Activated CD4-positive, alpha-beta T cell treated with anti-CD3 and anti-CD28 coated beads for 36 hours (primary cell): ENCODE measurements at regions of chrX and their contacts with region 1.

Region 1: DNA sequence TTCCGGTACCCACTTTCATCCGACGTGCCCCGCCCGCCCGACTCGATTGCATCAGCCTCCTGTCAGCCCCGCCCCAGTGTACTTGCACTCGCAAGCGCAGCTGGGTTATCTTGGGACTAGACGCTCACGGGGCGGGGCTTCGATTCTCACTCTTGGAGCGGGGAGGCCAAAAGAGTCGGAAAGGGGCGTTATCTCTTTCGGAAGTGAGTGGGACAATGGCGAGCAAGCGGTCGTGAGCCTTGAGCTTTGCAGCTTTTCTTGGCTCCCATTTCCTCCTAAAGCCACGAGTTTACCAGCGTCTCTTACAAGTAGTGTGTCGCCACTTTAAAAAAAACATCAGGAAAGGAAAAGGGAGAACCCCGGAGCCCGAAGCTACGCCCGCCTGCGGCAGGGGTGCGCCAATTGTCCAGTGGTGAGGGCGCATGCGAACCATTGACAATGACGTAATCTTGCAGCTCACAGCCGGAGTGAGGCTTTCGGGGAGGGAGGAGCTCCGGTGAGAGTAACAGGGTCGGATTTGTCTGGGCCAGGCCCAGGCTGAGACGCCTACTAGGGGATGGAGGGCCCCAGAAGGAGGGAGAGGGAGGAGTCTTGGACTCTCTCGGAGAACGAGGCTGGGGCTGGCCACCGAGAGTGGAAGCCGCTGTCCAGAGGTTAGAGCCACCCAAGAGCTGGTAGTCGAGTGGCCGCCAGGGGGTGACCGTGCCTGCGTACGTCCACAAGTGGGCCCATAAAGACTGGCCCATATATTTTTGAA is 109.5 kb downstream of the GNL3L start:
- DNase-seq: peak; percentile 96
- ATAC-seq: peak; percentile 93
- H3K4me3 Mint-ChIP-seq: peak overlapping the region; percentile 84
- H3K27ac Mint-ChIP-seq: peak overlapping the region; percentile 92
- H3K4me1 Mint-ChIP-seq: peaks cover 6% of the 10 kb centered on the region
- H3K27me3 Mint-ChIP-seq: no peaks in the 10 kb centered on the region

Region 2: GRCh38 chrX:53714580-53715345 is 924.8 kb before region 1 on chrX:
- CTCF ChIA-PET with region 1: no interaction called
- POLR2A ChIA-PET with region 1: no interaction called
- intact Hi-C with region 1: loop called in 1 of 2 experiments (anchors 10 kb)
- DNase-seq: peak; percentile 77
- ATAC-seq: peak; percentile 74
- H3K4me3 Mint-ChIP-seq: peak overlapping the region; percentile 86
- H3K27ac Mint-ChIP-seq: peak overlapping the region; percentile 96
- H3K4me1 Mint-ChIP-seq: peaks cover 37% of the 10 kb centered on the region
- H3K27me3 Mint-ChIP-seq: no peaks in the 10 kb centered on the region

Region 3: GRCh38 chrX:54439967-54440871 is 199.3 kb before region 1 on chrX and contains the start of gene TSR2:
- CTCF ChIA-PET with region 1: no interaction called
- POLR2A ChIA-PET with region 1: no interaction called
- intact Hi-C with region 1: loop called (anchors 1 kb)
- DNase-seq: peak; percentile 88
- ATAC-seq: peak; percentile 96
- H3K4me3 Mint-ChIP-seq: peak within 1 kb of the TSS; percentile 88
- H3K27ac Mint-ChIP-seq: peak within 1 kb of the TSS; percentile 83
- H3K4me1 Mint-ChIP-seq: peaks cover 18% of the 10 kb centered on the region
- H3K27me3 Mint-ChIP-seq: no peaks in the 10 kb centered on the region
- total RNA-seq, gene TSR2: 31.0 to 34.1 TPM

Region 4: DNA sequence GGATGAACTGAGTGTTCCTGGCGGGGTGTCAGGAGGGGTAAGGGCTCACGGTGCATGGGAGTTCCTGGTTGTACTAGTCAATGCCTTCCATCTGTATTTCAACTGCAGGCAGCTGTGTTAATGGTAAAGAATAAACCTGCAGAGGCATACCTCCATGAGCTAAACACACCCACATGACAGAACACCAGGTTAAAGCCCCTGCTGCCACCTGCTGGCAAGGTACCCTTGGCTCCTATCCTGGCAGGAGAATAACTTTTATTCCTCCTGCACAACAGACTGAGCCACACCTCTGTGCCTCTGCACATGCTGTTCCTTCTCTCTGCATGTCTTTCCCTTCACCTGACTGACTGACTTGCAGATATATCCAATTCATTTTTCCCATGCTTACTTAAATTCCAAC is 147.4 kb after region 1 on chrX:
- CTCF ChIA-PET with region 1: no interaction called
- POLR2A ChIA-PET with region 1: no interaction called
- intact Hi-C with region 1: loop called in 1 of 2 experiments (anchors 5 kb)
- DNase-seq: peak; percentile 58
- ATAC-seq: peak; percentile 73
- H3K4me3 Mint-ChIP-seq: no peak overlapping the region
- H3K27ac Mint-ChIP-seq: no peak overlapping the region
- H3K4me1 Mint-ChIP-seq: no peaks in the 10 kb centered on the region
- H3K27me3 Mint-ChIP-seq: no peaks in the 10 kb centered on the region

Region 5: GRCh38 chrX:54999717-55000598 is 360.4 kb after region 1 on chrX and contains the start of gene APEX2:
- CTCF ChIA-PET with region 1: interaction called, 3 read pairs
- POLR2A ChIA-PET with region 1: no interaction called
- intact Hi-C with region 1: loop called in 1 of 2 experiments (anchors 1 kb)
- DNase-seq: peak; percentile 92
- ATAC-seq: peak; percentile 96
- H3K4me3 Mint-ChIP-seq: peak within 1 kb of the TSS; percentile 94
- H3K27ac Mint-ChIP-seq: peak within 1 kb of the TSS; percentile 94
- H3K4me1 Mint-ChIP-seq: peaks cover 21% of the 10 kb centered on the region
- H3K27me3 Mint-ChIP-seq: no peaks in the 10 kb centered on the region
- total RNA-seq, gene APEX2: 37.7 to 41.4 TPM